H1 (cell line): ENCODE measurements at regions of chr19 and their contacts with region 1.

Region 1: DNA sequence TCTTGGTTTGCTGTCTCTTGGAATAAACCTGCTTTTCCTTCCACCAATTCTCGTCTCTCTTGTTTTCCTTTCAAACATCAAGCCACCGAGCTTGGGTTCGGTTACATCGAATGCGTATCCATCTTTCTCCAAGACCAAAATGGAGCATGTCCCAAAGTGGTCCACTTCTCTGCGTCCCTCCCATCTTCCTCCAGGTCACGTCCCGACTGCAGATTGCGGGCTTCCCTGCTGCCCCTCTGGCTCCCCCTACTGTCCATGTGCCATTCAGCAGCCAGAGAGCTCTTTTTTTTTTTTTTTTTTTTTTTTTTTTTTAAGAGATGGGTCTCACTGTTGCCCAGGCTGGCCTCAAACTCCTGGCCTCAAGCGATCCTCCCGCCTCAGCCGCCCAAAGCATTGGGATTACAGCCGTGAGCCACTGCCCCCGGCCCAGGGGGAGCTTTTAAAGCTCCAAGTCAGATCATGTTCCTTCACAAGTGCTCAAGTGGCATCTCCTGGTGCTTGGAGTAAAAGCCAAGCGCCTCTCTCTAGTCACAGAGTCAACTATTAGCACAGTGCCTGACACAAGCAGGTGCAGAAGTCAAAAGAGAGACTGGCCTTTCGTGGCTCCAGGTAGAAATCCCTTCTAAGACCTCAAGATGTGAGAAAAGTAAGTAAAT is 10.0 kb downstream of the COL5A3 start:
- DNase-seq: peak; percentile 44 to 87
- H3K4me3 ChIP-seq: no peak overlapping the region
- H3K27ac ChIP-seq: no peak overlapping the region
- H3K4me1 ChIP-seq: no peaks in the 10 kb centered on the region
- H3K27me3 ChIP-seq: no peaks in the 10 kb centered on the region; a peak in 3 of 7 replicates
- CTCF ChIP-seq: peak; percentile 77 to 89 (median 79)
- EP300 ChIP-seq: no peak
- POLR2A ChIP-seq: no peak
- RAD21 ChIP-seq: peak; percentile 79 to 80

Region 2: GRCh38 chr19:9939301-9939913 is 60.9 kb before region 1 on chr19:
- CTCF ChIA-PET with region 1: interaction called, 19 read pairs
- POLR2A ChIA-PET with region 1: no interaction called
- DNase-seq: no peak
- H3K4me3 ChIP-seq: no peak overlapping the region
- H3K27ac ChIP-seq: no peak overlapping the region
- H3K4me1 ChIP-seq: peaks cover 4 to 13% (median 7%) of the 10 kb centered on the region in 4 experiments
- H3K27me3 ChIP-seq: peaks cover 0 to 2% (median 0%) of the 10 kb centered on the region in 4 experiments; a peak in 2 of 7 replicates
- CTCF ChIP-seq: no peak
- EP300 ChIP-seq: no peak
- POLR2A ChIP-seq: no peak
- RAD21 ChIP-seq: no peak

Region 3: GRCh38 chr19:9966448-9967143 is 33.7 kb before region 1 on chr19:
- CTCF ChIA-PET with region 1: interaction called, 30 read pairs
- POLR2A ChIA-PET with region 1: no interaction called
- DNase-seq: peak; percentile 49 to 83
- H3K4me3 ChIP-seq: peak overlapping the region; percentile 4 to 56 (median 42); a peak in 7 of 8 replicates
- H3K27ac ChIP-seq: no peak overlapping the region
- H3K4me1 ChIP-seq: peaks cover 0 to 9% (median 0%) of the 10 kb centered on the region in 4 experiments; a peak in 2 of 7 replicates
- H3K27me3 ChIP-seq: peaks cover 0 to 10% (median 7%) of the 10 kb centered on the region in 4 experiments; a peak in 6 of 7 replicates
- CTCF ChIP-seq: peak in 2 of 3 experiments; percentile 27; a peak in 2 of 4 replicates
- EP300 ChIP-seq: no peak
- POLR2A ChIP-seq: 0 out of 3 replicates have a peak, but pooled peaks of 1 of the 2 experiments have one; percentile 29
- RAD21 ChIP-seq: peak in 1 of 2 experiments; percentile 38; a peak in 2 of 4 replicates

Region 4: GRCh38 chr19:10018263-10018662 is 18.0 kb after region 1 on chr19:
- CTCF ChIA-PET with region 1: interaction called, 29 read pairs
- POLR2A ChIA-PET with region 1: no interaction called
- DNase-seq: no peak
- H3K4me3 ChIP-seq: no peak overlapping the region
- H3K27ac ChIP-seq: no peak overlapping the region
- H3K4me1 ChIP-seq: no peaks in the 10 kb centered on the region
- H3K27me3 ChIP-seq: no peaks in the 10 kb centered on the region
- CTCF ChIP-seq: no peak
- EP300 ChIP-seq: no peak
- POLR2A ChIP-seq: no peak
- RAD21 ChIP-seq: no peak

Region 5: GRCh38 chr19:10036601-10037071 is 36.3 kb after region 1 on chr19:
- CTCF ChIA-PET with region 1: interaction called, 10 read pairs
- POLR2A ChIA-PET with region 1: no interaction called
- DNase-seq: no peak
- H3K4me3 ChIP-seq: no peak overlapping the region
- H3K27ac ChIP-seq: no peak overlapping the region
- H3K4me1 ChIP-seq: no peaks in the 10 kb centered on the region
- H3K27me3 ChIP-seq: no peaks in the 10 kb centered on the region; a peak in 1 of 7 replicates
- CTCF ChIP-seq: no peak
- EP300 ChIP-seq: no peak
- POLR2A ChIP-seq: no peak
- RAD21 ChIP-seq: no peak

Region 6: GRCh38 chr19:10091370-10091687 is 91.0 kb after region 1 on chr19:
- CTCF ChIA-PET with region 1: no interaction called
- POLR2A ChIA-PET with region 1: no interaction called
- DNase-seq: no peak
- H3K4me3 ChIP-seq: no peak overlapping the region
- H3K27ac ChIP-seq: no peak overlapping the region
- H3K4me1 ChIP-seq: peaks cover 0 to 6% (median 2%) of the 10 kb centered on the region in 4 experiments; a peak in 3 of 7 replicates
- H3K27me3 ChIP-seq: peaks cover 8 to 18% (median 15%) of the 10 kb centered on the region in 4 experiments
- CTCF ChIP-seq: no peak
- EP300 ChIP-seq: no peak
- POLR2A ChIP-seq: no peak
- RAD21 ChIP-seq: no peak